ENCODE measurements at regions of chr1 and their contacts with region 1.

Region 1: GRCh38 chr1:39657923-39658485 is 13.9 kb downstream of the NT5C1A start:
- DNase-seq: peak; percentile 79 to 89 (median 81)
- H3K4me3 ChIP-seq: no peak overlapping the region
- H3K27ac ChIP-seq: no peak overlapping the region
- H3K4me1 ChIP-seq: peaks cover 0 to 9% (median 0%) of the 10 kb centered on the region in 3 donors
- H3K27me3 ChIP-seq: no peaks in the 10 kb centered on the region
- CTCF ChIP-seq: peak; percentile 64

Region 2: DNA sequence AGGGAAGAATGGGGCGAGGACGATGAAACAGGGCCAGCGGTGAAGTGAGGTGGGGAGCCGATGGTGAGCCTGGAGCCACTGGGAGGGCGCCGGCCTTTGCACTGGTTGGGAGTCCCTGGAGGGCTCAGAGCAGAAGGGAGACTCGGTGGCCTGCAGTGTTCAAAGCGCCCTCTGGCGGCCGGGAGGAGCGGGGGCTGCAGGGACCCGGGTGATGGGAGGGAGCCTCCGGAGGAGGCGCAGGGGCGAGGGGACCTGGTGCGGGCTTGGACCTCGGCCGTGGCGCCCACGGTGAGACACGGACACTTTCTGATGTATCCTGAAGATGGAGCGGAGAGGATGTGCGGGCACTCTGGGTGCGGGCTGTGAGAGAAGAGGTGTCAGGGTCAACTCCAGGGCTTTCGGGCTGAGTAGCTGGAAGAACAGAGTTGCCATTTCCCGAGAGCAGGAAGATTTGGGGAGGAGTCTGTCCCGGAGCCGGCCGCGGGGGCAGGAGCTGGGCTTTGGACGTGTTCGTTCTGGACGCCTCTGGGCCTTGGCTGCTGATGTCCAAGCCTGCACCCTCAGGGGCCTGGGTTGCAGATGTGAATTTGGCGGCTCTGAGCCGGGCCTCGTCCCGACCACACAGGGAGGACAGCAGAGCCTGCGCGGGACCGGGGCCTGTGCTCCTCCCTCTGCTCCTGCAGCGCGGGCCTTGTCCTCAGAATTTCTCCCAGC is 48.2 kb before region 1 on chr1:
- intact Hi-C with region 1: loop called (anchors 5 kb)
- DNase-seq: peak; percentile 55 to 81 (median 69)
- H3K4me3 ChIP-seq: no peak overlapping the region
- H3K27ac ChIP-seq: no peak overlapping the region
- H3K4me1 ChIP-seq: no peaks in the 10 kb centered on the region
- H3K27me3 ChIP-seq: no peaks in the 10 kb centered on the region
- CTCF ChIP-seq: peak; percentile 51

Region 3: GRCh38 chr1:39788758-39789570 is 131.0 kb after region 1 on chr1 and contains the start of gene BMP8B:
- intact Hi-C with region 1: no loop called
- DNase-seq: peak; percentile 26 to 93 (median 47)
- H3K4me3 ChIP-seq: peak within 1 kb of the TSS in 1 of 3 donors; percentile 21
- H3K27ac ChIP-seq: no peak within 1 kb of the TSS
- H3K4me1 ChIP-seq: peaks cover 0 to 2% (median 0%) of the 10 kb centered on the region in 3 donors
- H3K27me3 ChIP-seq: peaks cover 5% of the 10 kb centered on the region
- CTCF ChIP-seq: no peak
- total RNA-seq, gene BMP8B: 4.9 TPM

Region 4: GRCh38 chr1:39901698-39902459 is 243.9 kb after region 1 on chr1 and contains the start of gene MYCL:
- intact Hi-C with region 1: no loop called
- DNase-seq: peak; percentile 88 to 94 (median 92)
- H3K4me3 ChIP-seq: peak within 1 kb of the TSS; percentile 31 to 65 (median 61)
- H3K27ac ChIP-seq: peak within 1 kb of the TSS in 1 of 2 donors; percentile 24
- H3K4me1 ChIP-seq: peaks cover 0 to 3% (median 2%) of the 10 kb centered on the region in 3 donors
- H3K27me3 ChIP-seq: peaks cover 4% of the 10 kb centered on the region
- CTCF ChIP-seq: peak; percentile 75
- total RNA-seq, gene MYCL: 4.2 TPM